CD4-positive, alpha-beta T cell (primary cell): ENCODE measurements at regions of chr12 and their contacts with region 1.

Region 1: GRCh38 chr12:31682136-31682962 is 22.9 kb downstream of the ETFBKMT start:
- DNase-seq: peak; percentile 42 to 89 (median 58)
- ATAC-seq: peak; percentile 92
- H3K4me3 ChIP-seq: no peak overlapping the region
- H3K4me3 Mint-ChIP-seq: peak overlapping the region; percentile 22
- H3K27ac ChIP-seq: no peak overlapping the region
- H3K27ac Mint-ChIP-seq: peak overlapping the region; percentile 31
- H3K4me1 ChIP-seq: no peaks in the 10 kb centered on the region
- H3K4me1 Mint-ChIP-seq: peaks cover 11% of the 10 kb centered on the region
- H3K27me3 ChIP-seq: no peaks in the 10 kb centered on the region
- H3K27me3 Mint-ChIP-seq: no peaks in the 10 kb centered on the region
- CTCF ChIP-seq: peak; percentile 78

Region 2: GRCh38 chr12:31496257-31496656 is 186.1 kb before region 1 on chr12:
- CTCF ChIA-PET with region 1: no interaction called
- POLR2A ChIA-PET with region 1: no interaction called
- intact Hi-C with region 1: no loop called
- DNase-seq: no peak
- ATAC-seq: no peak
- H3K4me3 ChIP-seq: no peak overlapping the region
- H3K4me3 Mint-ChIP-seq: no peak overlapping the region
- H3K27ac ChIP-seq: no peak overlapping the region
- H3K27ac Mint-ChIP-seq: no peak overlapping the region
- H3K4me1 ChIP-seq: no peaks in the 10 kb centered on the region
- H3K4me1 Mint-ChIP-seq: no peaks in the 10 kb centered on the region
- H3K27me3 ChIP-seq: no peaks in the 10 kb centered on the region
- H3K27me3 Mint-ChIP-seq: peaks cover 14% of the 10 kb centered on the region
- CTCF ChIP-seq: no peak

Region 3: DNA sequence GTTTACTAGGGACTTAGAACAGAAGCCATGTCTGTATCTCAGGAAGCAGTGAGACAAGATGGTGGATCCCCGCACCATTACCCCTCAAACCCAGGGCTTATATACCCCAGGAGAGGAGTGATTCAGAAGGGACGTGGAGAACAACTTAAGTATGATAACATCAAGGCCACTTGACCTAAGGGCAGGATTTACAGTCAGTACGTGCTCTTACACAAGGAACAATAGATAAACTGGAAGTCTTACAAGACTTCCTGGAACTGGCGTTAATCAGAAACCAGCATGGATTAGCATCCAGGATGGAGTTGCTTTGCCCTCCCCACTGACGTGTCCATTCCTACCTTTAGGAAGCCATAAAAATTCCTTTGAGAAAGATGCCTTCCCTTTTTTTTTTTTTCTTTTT is 31.4 kb before region 1 on chr12:
- CTCF ChIA-PET with region 1: interaction called, 10 read pairs
- POLR2A ChIA-PET with region 1: interaction called, 13 read pairs
- intact Hi-C with region 1: no loop called
- DNase-seq: no peak
- ATAC-seq: no peak
- H3K4me3 ChIP-seq: no peak overlapping the region
- H3K4me3 Mint-ChIP-seq: no peak overlapping the region
- H3K27ac ChIP-seq: no peak overlapping the region
- H3K27ac Mint-ChIP-seq: no peak overlapping the region
- H3K4me1 ChIP-seq: peaks cover 10% of the 10 kb centered on the region
- H3K4me1 Mint-ChIP-seq: peaks cover 7% of the 10 kb centered on the region
- H3K27me3 ChIP-seq: no peaks in the 10 kb centered on the region
- H3K27me3 Mint-ChIP-seq: no peaks in the 10 kb centered on the region
- CTCF ChIP-seq: no peak

Region 4: DNA sequence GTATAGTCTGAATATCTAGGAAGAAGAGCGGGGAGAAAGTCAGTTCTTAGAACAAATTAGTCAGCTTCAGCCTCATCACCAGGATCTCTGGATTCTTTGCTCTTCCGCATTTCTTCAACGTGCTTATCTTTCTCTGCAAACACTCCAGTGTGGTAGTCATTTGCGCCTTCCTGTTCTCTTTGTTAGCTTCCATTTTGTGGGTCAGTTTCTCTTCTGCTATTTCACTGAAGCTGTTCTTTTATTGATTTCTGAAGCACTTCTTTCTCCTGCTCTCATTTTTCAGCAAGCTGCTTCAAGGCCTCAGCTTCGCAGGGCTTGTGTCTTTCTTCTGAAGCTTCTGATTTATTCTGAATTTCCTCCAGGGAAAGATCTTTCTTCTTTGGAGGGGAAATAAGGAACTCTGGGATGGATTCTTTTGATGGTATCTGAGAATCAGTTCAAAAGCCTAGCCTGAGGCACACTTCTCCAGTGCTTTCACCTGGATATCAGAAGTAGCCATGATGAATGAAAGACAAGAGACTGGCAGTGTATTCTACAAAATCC is 33.0 kb after region 1 on chr12:
- CTCF ChIA-PET with region 1: interaction called, 3 read pairs
- POLR2A ChIA-PET with region 1: no interaction called
- intact Hi-C with region 1: loop called in 1 of 2 experiments (anchors 2 kb)
- DNase-seq: peak in 2 of 14 experiments; percentile 40 to 58
- ATAC-seq: no peak
- H3K4me3 ChIP-seq: no peak overlapping the region
- H3K4me3 Mint-ChIP-seq: no peak overlapping the region
- H3K27ac ChIP-seq: no peak overlapping the region
- H3K27ac Mint-ChIP-seq: peak overlapping the region; percentile 46
- H3K4me1 ChIP-seq: peaks cover 3% of the 10 kb centered on the region
- H3K4me1 Mint-ChIP-seq: peaks cover 15% of the 10 kb centered on the region
- H3K27me3 ChIP-seq: no peaks in the 10 kb centered on the region
- H3K27me3 Mint-ChIP-seq: no peaks in the 10 kb centered on the region
- CTCF ChIP-seq: no peak

Region 5: DNA sequence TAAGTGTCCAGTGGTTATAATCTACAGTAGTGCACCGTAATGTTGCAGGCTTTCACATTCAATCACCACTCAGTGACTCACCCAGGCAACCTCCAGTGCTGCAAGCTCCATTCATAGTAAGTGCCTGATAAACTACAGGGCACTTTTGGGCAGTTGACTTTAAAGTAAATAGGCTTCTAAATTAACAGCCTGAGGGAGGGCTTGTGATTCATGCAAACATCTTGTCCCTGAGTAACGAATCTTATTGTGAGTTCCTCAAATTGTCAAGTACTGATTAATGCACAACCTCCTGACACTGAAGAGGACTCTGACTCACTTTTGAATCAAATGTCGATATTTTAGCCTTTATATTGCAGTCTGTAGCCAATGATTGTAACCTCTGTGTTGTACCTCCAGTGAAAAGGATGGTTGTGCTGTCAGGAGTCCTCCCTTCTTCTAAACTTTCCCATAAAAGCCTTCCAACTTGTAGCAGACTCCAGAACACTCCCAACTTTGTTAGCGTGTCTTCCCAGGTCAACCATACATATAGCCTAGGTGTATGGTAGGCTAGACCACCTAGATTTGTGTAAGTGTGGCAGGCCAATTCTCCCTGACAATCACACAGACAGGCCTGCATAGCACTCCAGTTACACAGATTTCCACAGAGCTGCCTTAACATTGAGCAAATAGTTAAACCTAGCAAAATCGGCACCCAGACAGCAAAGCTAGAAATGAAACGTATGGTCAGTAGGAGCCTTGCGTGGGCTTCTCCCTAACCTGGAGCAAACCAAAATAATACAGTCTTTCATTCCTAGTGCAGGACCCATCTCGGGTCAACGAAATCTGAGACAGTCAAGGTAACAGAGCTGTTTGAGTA is 369.4 kb after region 1 on chr12:
- CTCF ChIA-PET with region 1: interaction called, 4 read pairs
- POLR2A ChIA-PET with region 1: no interaction called
- intact Hi-C with region 1: loop called in 1 of 2 experiments (anchors 5 kb)
- DNase-seq: peak in 2 of 14 experiments; percentile 23 to 39
- ATAC-seq: no peak
- H3K4me3 ChIP-seq: no peak overlapping the region
- H3K4me3 Mint-ChIP-seq: no peak overlapping the region
- H3K27ac ChIP-seq: no peak overlapping the region
- H3K27ac Mint-ChIP-seq: no peak overlapping the region
- H3K4me1 ChIP-seq: peaks cover 3% of the 10 kb centered on the region
- H3K4me1 Mint-ChIP-seq: peaks cover 7% of the 10 kb centered on the region
- H3K27me3 ChIP-seq: no peaks in the 10 kb centered on the region
- H3K27me3 Mint-ChIP-seq: no peaks in the 10 kb centered on the region
- CTCF ChIP-seq: no peak

Region 6: DNA sequence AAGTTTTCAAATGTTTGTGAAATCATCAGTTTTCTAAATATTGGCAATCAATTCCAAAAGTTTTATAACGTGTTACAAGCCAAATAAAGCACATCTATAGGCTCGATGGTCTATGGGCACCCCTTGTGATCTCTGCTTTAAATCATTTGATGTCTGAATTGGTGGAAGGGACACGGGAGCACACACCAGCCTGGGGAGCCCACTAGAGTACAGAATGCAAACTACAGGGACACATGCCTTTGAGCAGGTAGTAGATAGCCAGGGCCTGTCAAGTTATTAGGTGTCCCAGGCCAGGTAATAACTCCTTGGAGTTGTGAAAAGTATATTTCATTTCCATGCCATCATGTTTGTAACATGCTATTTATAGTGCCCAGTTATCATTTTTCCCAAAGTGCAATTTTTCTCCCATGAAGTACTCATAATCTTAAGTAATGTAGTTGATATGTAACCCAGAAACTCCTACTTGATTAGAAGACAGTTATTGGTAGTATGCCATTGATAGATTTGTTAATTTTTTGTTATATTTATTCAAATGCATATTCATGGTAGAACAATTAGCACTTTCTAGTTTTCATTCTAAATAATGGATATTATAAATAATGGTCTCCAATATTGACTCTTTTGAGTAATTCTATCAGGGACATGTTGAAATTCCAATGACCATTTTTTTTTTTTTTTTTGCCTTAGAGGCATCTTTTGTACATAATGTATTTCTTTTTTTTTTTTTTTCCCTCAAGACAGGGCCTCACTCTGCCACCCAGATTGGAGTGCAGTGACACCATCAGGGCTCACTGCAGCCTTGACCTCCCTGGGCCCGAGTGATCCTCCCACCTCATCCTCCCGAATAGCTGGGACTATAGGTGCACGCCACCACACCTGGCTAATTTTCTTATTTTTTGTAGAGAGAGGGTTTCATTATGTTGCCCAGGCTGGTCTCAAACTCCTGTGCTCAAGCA is 620.1 kb after region 1 on chr12:
- CTCF ChIA-PET with region 1: interaction called, 3 read pairs
- POLR2A ChIA-PET with region 1: no interaction called
- intact Hi-C with region 1: loop called (anchors 2 kb)
- DNase-seq: peak in 5 of 14 experiments; percentile 3 to 51 (median 11)
- ATAC-seq: no peak
- H3K4me3 ChIP-seq: no peak overlapping the region
- H3K4me3 Mint-ChIP-seq: no peak overlapping the region
- H3K27ac ChIP-seq: no peak overlapping the region
- H3K27ac Mint-ChIP-seq: no peak overlapping the region
- H3K4me1 ChIP-seq: no peaks in the 10 kb centered on the region
- H3K4me1 Mint-ChIP-seq: peaks cover 10% of the 10 kb centered on the region
- H3K27me3 ChIP-seq: no peaks in the 10 kb centered on the region
- H3K27me3 Mint-ChIP-seq: no peaks in the 10 kb centered on the region
- CTCF ChIP-seq: peak; percentile 31

Region 7: GRCh38 chr12:32312049-32312670 is 629.8 kb after region 1 on chr12:
- CTCF ChIA-PET with region 1: interaction called, 4 read pairs
- POLR2A ChIA-PET with region 1: no interaction called
- intact Hi-C with region 1: loop called in 1 of 2 experiments (anchors 1 kb)
- DNase-seq: peak in 4 of 14 experiments; percentile 4 to 69 (median 64)
- ATAC-seq: peak; percentile 55
- H3K4me3 ChIP-seq: no peak overlapping the region
- H3K4me3 Mint-ChIP-seq: no peak overlapping the region
- H3K27ac ChIP-seq: no peak overlapping the region
- H3K27ac Mint-ChIP-seq: no peak overlapping the region
- H3K4me1 ChIP-seq: no peaks in the 10 kb centered on the region
- H3K4me1 Mint-ChIP-seq: peaks cover 6% of the 10 kb centered on the region
- H3K27me3 ChIP-seq: no peaks in the 10 kb centered on the region
- H3K27me3 Mint-ChIP-seq: no peaks in the 10 kb centered on the region
- CTCF ChIP-seq: peak; percentile 78

Region 8: GRCh38 chr12:32586390-32586789 is 904.0 kb after region 1 on chr12:
- CTCF ChIA-PET with region 1: no interaction called
- POLR2A ChIA-PET with region 1: no interaction called
- intact Hi-C with region 1: no loop called
- DNase-seq: peak in 2 of 14 experiments; percentile 15
- ATAC-seq: no peak
- H3K4me3 ChIP-seq: no peak overlapping the region
- H3K4me3 Mint-ChIP-seq: no peak overlapping the region
- H3K27ac ChIP-seq: no peak overlapping the region
- H3K27ac Mint-ChIP-seq: no peak overlapping the region
- H3K4me1 ChIP-seq: peaks cover 9% of the 10 kb centered on the region
- H3K4me1 Mint-ChIP-seq: peaks cover 37% of the 10 kb centered on the region
- H3K27me3 ChIP-seq: no peaks in the 10 kb centered on the region
- H3K27me3 Mint-ChIP-seq: no peaks in the 10 kb centered on the region
- CTCF ChIP-seq: no peak